ENCODE measurements at regions of chr14 and their contacts with region 1.

Region 1: GRCh38 chr14:75487155-75487671 is 35.1 kb upstream of the BATF start:
- DNase-seq: peak; percentile 32
- ATAC-seq: peak; percentile 86
- H3K4me3 Mint-ChIP-seq: no peak overlapping the region
- H3K27ac Mint-ChIP-seq: no peak overlapping the region
- H3K4me1 Mint-ChIP-seq: peaks cover 20% of the 10 kb centered on the region
- H3K27me3 Mint-ChIP-seq: no peaks in the 10 kb centered on the region
- CTCF ChIP-seq: no peak

Region 2: GRCh38 chr14:75333606-75334548 is 153.3 kb before region 1 on chr14:
- CTCF ChIA-PET with region 1: interaction called, 10 read pairs
- POLR2A ChIA-PET with region 1: interaction called, 3 read pairs
- intact Hi-C with region 1: no loop called
- DNase-seq: peak; percentile 71
- ATAC-seq: peak; percentile 77
- H3K4me3 Mint-ChIP-seq: peak overlapping the region; percentile 65
- H3K27ac Mint-ChIP-seq: peak overlapping the region; percentile 87
- H3K4me1 Mint-ChIP-seq: peaks cover 22% of the 10 kb centered on the region
- H3K27me3 Mint-ChIP-seq: no peaks in the 10 kb centered on the region
- CTCF ChIP-seq: no peak

Region 3: GRCh38 chr14:75472706-75473105 is 14.5 kb before region 1 on chr14:
- CTCF ChIA-PET with region 1: no interaction called
- POLR2A ChIA-PET with region 1: no interaction called
- intact Hi-C with region 1: no loop called
- DNase-seq: no peak
- ATAC-seq: no peak
- H3K4me3 Mint-ChIP-seq: no peak overlapping the region
- H3K27ac Mint-ChIP-seq: no peak overlapping the region
- H3K4me1 Mint-ChIP-seq: no peaks in the 10 kb centered on the region
- H3K27me3 Mint-ChIP-seq: peaks cover 1% of the 10 kb centered on the region
- CTCF ChIP-seq: no peak

Region 4: GRCh38 chr14:75506930-75507329 is 19.7 kb after region 1 on chr14:
- CTCF ChIA-PET with region 1: interaction called, 13 read pairs
- POLR2A ChIA-PET with region 1: interaction called, 5 read pairs
- intact Hi-C with region 1: no loop called
- DNase-seq: no peak
- ATAC-seq: no peak
- H3K4me3 Mint-ChIP-seq: no peak overlapping the region
- H3K27ac Mint-ChIP-seq: no peak overlapping the region
- H3K4me1 Mint-ChIP-seq: peaks cover 24% of the 10 kb centered on the region
- H3K27me3 Mint-ChIP-seq: no peaks in the 10 kb centered on the region
- CTCF ChIP-seq: no peak

Region 5: DNA sequence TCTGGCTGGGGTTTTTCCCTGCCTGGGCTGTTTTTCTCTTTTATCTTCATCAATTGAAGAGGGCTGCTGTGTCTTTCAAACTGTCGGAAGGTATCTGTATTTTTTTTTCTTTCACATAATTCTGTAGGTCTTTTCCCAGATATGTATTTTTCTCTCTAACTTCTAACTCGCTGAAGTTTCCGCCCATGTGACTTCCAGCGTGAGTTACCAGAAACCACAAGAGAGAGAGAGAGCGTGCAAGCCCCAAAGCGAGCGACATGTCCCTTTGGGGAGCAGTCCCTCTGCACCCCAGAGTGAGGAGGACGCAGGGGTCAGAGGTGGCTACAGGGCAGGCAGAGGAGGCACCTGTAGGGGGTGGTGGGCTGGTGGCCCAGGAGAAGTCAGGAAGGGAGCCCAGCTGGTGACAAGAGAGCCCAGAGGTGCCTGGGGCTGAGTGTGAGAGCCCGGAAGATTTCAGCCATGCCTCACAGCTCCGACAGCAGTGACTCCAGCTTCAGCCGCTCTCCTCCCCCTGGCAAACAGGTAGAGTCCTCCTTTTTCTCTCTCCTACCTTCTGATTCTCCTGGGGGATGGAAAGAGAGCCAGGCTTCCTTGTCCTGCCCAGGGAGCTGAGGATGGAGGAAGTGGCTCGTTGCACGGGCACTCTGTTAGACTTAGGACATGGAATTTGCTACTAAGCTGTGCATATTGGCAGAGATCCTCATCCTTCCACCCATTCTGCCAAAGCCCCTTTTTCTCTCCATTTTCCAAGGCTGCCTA is 35.2 kb after region 1 on chr14 and contains the start of gene BATF:
- CTCF ChIA-PET with region 1: interaction called, 28 read pairs
- POLR2A ChIA-PET with region 1: interaction called, 4 read pairs
- intact Hi-C with region 1: no loop called
- DNase-seq: peak; percentile 84
- ATAC-seq: peak; percentile 64
- H3K4me3 Mint-ChIP-seq: peak within 1 kb of the TSS; percentile 90
- H3K27ac Mint-ChIP-seq: peak within 1 kb of the TSS; percentile 98
- H3K4me1 Mint-ChIP-seq: peaks cover 59% of the 10 kb centered on the region
- H3K27me3 Mint-ChIP-seq: no peaks in the 10 kb centered on the region
- CTCF ChIP-seq: no peak
- total RNA-seq, gene BATF: 46.4 to 47.0 TPM

Measured in activated CD8-positive, alpha-beta T cell treated with anti-CD3 and anti-CD28 coated beads for 36 hours (primary cell).